ENCODE measurements at regions of chr11 and their contacts with region 1.

Region 1: DNA sequence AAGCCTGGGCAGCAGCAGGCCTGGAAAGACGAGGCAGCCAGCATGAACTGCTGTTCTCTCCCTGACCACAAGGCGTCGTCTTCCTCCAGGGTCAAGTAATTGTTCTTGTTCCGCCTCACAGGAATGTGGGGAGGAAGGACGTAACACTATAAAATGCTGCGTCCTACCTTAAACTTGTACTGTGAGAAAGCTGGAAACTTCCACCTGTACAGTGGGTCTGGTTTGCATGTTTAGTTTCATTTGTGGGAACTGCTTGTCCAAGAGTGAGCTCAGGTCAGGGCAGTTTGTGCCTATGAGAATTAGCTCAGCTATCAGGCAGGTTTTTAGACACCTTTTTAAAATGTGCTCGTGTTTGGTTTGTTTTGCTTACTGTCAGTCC is 55.2 kb downstream of the PANX1 start:
- DNase-seq: peak; percentile 40
- H3K4me3 Mint-ChIP-seq: no peak overlapping the region
- H3K27ac Mint-ChIP-seq: no peak overlapping the region
- H3K4me1 Mint-ChIP-seq: no peaks in the 10 kb centered on the region
- H3K27me3 Mint-ChIP-seq: no peaks in the 10 kb centered on the region

Region 2: GRCh38 chr11:93857413-93858120 is 326.3 kb before region 1 on chr11:
- CTCF ChIA-PET with region 1: no interaction called
- DNase-seq: no peak
- H3K4me3 Mint-ChIP-seq: no peak overlapping the region
- H3K27ac Mint-ChIP-seq: no peak overlapping the region
- H3K4me1 Mint-ChIP-seq: no peaks in the 10 kb centered on the region
- H3K27me3 Mint-ChIP-seq: peaks cover 5% of the 10 kb centered on the region

Region 3: DNA sequence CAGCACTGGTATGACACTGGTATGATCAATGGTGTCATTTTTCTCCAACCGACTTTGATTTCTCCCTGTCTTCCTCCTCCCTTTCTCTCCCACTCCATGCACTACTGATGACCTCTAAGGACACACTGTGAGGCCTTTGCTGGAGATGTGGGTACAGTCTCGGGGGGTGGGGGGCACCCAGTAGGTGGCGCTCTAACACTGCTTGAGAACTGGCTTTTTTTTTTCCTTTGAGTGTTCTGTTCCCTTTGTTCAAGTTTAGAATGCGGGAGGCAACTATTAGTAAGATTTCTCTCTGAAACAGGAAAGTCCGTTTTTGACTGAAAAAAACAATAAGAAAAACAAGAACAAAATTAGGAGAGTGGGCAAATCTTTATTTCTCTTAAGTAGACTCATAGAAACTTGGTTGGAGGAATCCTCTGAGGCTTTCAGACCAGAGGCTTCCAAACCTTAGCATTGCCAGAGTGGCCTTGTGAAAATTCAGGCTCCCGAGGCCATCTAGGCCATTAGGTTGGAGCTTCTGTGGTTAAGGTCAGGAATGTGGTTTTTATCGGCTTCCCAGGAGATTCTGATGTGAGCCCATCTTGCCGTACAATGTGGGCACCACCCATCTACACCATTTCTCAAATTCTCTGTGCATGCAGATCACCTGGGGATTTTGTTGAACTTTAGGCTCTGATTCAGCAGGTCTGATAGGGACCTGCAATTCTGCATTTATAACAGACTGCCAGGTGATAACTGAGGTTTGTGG is 12.0 kb before region 1 on chr11:
- CTCF ChIA-PET with region 1: interaction called, 17 read pairs
- DNase-seq: peak; percentile 57
- H3K4me3 Mint-ChIP-seq: no peak overlapping the region
- H3K27ac Mint-ChIP-seq: no peak overlapping the region
- H3K4me1 Mint-ChIP-seq: no peaks in the 10 kb centered on the region
- H3K27me3 Mint-ChIP-seq: no peaks in the 10 kb centered on the region